Naive thymus-derived CD4-positive, alpha-beta T cell (primary cell): ENCODE measurements at regions of chr11 and their contacts with region 1.

Region 1: DNA sequence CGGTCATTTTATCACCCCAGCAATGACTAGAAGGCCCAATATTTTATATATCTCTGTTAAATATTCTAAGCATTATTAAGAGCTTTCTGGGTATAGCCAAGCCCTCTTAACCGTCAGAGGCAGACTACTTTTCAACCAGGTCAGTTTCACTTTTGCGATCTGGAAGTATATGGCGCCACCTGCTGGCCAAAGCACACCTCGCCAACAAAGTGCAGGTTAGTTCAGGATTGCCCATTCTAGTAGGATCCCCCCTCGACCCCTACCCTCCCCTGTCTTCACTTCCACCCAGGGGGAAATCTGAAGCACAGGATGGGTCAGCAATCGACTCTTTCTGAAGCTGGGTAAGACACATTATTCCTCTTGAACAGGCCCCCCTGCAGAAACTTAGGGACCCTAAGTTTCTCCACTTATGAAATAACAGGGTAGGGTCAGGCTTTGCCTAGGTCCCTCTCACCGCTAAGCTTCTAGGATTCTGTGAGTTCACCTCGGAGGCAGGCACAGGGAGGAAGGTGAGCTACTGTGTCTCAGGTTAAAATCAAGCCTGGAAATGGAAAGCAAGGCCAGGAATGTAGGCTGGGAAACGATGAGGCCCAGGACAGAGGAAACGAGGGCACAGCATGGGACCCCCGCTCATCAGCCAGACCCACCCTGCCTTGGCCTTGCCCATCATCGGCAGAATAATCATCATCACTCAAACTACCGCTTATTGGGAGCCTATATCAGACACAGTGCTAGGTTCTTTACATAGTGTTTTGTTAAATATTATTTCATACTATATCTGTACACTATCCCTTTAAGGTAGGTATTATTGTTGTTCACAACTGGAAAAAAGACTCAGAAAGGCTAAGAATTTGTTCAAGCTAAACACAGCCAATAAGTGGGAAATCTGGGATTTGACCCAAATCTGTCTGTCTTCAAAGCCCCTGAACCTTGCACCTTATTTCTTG is 35.6 kb downstream of the KCNJ1 start:
- DNase-seq: peak; percentile 68 to 85 (median 80)
- ATAC-seq: peak; percentile 90
- H3K4me3 ChIP-seq: peak overlapping the region; percentile 43
- H3K4me3 Mint-ChIP-seq: peak overlapping the region; percentile 61 to 87 (median 76)
- H3K27ac ChIP-seq: peak overlapping the region; percentile 67
- H3K27ac Mint-ChIP-seq: peak overlapping the region; percentile 58 to 98 (median 89)
- H3K4me1 ChIP-seq: peaks cover 11 to 15% of the 10 kb centered on the region in 2 donors
- H3K4me1 Mint-ChIP-seq: peaks cover 15 to 35% (median 24%) of the 10 kb centered on the region in 7 donors
- H3K27me3 ChIP-seq: no peaks in the 10 kb centered on the region
- H3K27me3 Mint-ChIP-seq: peaks cover 0 to 4% (median 0%) of the 10 kb centered on the region in 5 donors

Region 2: GRCh38 chr11:128026596-128026995 is 804.9 kb before region 1 on chr11:
- CTCF ChIA-PET with region 1: interaction called, 14 read pairs
- POLR2A ChIA-PET with region 1: no interaction called
- intact Hi-C with region 1: loop called (anchors 1 kb)
- DNase-seq: no peak
- ATAC-seq: peak; percentile 34
- H3K4me3 ChIP-seq: no peak overlapping the region
- H3K4me3 Mint-ChIP-seq: no peak overlapping the region
- H3K27ac ChIP-seq: no peak overlapping the region
- H3K27ac Mint-ChIP-seq: peak overlapping the region in 1 of 9 donors; percentile 12
- H3K4me1 ChIP-seq: peaks cover 0 to under 1% of the 10 kb centered on the region in 2 donors
- H3K4me1 Mint-ChIP-seq: peaks cover 0 to 5% (median 3%) of the 10 kb centered on the region in 7 donors
- H3K27me3 ChIP-seq: no peaks in the 10 kb centered on the region
- H3K27me3 Mint-ChIP-seq: peaks cover 0 to 37% (median 2%) of the 10 kb centered on the region in 5 donors

Region 3: GRCh38 chr11:128195057-128195751 is 636.2 kb before region 1 on chr11:
- CTCF ChIA-PET with region 1: interaction called, 3 read pairs
- POLR2A ChIA-PET with region 1: no interaction called
- intact Hi-C with region 1: loop called in 1 of 2 experiments (anchors 1 kb)
- DNase-seq: peak in 7 of 9 donors; percentile 63 to 85 (median 76)
- ATAC-seq: peak; percentile 86
- H3K4me3 ChIP-seq: no peak overlapping the region
- H3K4me3 Mint-ChIP-seq: peak overlapping the region in 9 of 10 donors; percentile 1 to 67 (median 49)
- H3K27ac ChIP-seq: peak overlapping the region; percentile 17
- H3K27ac Mint-ChIP-seq: peak overlapping the region in 8 of 9 donors; percentile 72 to 87 (median 81)
- H3K4me1 ChIP-seq: peaks cover 31 to 33% of the 10 kb centered on the region in 2 donors
- H3K4me1 Mint-ChIP-seq: peaks cover 31 to 45% (median 41%) of the 10 kb centered on the region in 7 donors
- H3K27me3 ChIP-seq: no peaks in the 10 kb centered on the region
- H3K27me3 Mint-ChIP-seq: peaks cover 0 to 2% (median 0%) of the 10 kb centered on the region in 5 donors

Region 4: GRCh38 chr11:128506999-128507611 is 324.3 kb before region 1 on chr11:
- CTCF ChIA-PET with region 1: interaction called, 3 read pairs
- POLR2A ChIA-PET with region 1: no interaction called
- intact Hi-C with region 1: loop called in 1 of 2 experiments (anchors 5 kb)
- DNase-seq: peak in 1 of 9 donors; percentile 60
- ATAC-seq: no peak
- H3K4me3 ChIP-seq: peak overlapping the region; percentile 96
- H3K4me3 Mint-ChIP-seq: peak overlapping the region; percentile 85 to 100 (median 98)
- H3K27ac ChIP-seq: peak overlapping the region; percentile 97
- H3K27ac Mint-ChIP-seq: peak overlapping the region; percentile 87 to 99 (median 97)
- H3K4me1 ChIP-seq: peaks cover 89 to 91% of the 10 kb centered on the region in 2 donors
- H3K4me1 Mint-ChIP-seq: peaks cover 70 to 98% (median 92%) of the 10 kb centered on the region in 7 donors
- H3K27me3 ChIP-seq: no peaks in the 10 kb centered on the region
- H3K27me3 Mint-ChIP-seq: no peaks in the 10 kb centered on the region

Region 5: DNA sequence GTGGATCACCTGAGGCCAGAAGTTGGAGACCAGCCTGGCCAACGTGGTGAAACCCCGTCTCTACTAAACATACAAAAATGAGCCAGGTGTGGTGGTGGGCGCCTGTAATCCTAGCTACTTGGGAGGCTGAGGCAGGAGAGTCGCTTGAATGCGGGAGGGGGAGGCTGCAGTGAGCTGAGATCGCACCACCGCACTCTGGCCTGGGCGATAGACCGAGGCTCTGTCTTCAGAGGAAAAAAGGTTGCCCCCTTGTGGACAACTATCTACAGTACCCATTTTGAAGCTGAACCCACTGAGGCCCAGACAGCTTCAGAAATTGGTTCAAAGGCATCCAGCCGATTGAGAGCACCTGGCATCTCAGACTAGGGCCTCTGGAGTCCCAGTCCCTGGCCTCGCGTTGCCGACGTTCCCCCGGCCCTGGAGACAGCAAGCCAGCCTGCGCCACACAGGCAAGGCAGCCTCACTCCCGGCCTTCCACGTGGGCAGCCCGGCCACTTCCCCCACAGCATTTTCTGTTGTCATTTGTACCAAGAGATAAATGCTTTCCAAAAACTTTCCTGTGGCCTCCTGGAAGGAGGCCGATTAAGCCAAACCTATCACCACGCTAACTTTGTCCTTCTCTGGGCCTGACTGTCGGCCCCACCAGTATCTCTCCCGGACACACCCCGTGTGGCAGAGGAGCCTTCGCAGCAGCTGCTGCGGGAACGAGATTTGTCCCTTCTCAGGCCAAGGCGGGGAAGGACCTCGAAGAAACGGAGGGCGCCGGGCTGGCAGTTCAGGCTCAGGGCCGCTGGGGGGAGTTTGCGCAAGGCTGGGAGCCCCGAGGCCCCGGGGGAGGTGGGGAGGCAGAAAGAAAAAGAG is 54.8 kb before region 1 on chr11:
- CTCF ChIA-PET with region 1: interaction called, 12 read pairs
- POLR2A ChIA-PET with region 1: no interaction called
- intact Hi-C with region 1: loop called (anchors 1 to 2 kb)
- DNase-seq: peak in 7 of 9 donors; percentile 12 to 44 (median 38)
- ATAC-seq: peak; percentile 80
- H3K4me3 ChIP-seq: no peak overlapping the region
- H3K4me3 Mint-ChIP-seq: no peak overlapping the region
- H3K27ac ChIP-seq: no peak overlapping the region
- H3K27ac Mint-ChIP-seq: peak overlapping the region in 6 of 9 donors; percentile 34 to 65 (median 58)
- H3K4me1 ChIP-seq: peaks cover 21 to 34% of the 10 kb centered on the region in 2 donors
- H3K4me1 Mint-ChIP-seq: peaks cover 46 to 89% (median 66%) of the 10 kb centered on the region in 7 donors
- H3K27me3 ChIP-seq: no peaks in the 10 kb centered on the region
- H3K27me3 Mint-ChIP-seq: no peaks in the 10 kb centered on the region

Region 6: DNA sequence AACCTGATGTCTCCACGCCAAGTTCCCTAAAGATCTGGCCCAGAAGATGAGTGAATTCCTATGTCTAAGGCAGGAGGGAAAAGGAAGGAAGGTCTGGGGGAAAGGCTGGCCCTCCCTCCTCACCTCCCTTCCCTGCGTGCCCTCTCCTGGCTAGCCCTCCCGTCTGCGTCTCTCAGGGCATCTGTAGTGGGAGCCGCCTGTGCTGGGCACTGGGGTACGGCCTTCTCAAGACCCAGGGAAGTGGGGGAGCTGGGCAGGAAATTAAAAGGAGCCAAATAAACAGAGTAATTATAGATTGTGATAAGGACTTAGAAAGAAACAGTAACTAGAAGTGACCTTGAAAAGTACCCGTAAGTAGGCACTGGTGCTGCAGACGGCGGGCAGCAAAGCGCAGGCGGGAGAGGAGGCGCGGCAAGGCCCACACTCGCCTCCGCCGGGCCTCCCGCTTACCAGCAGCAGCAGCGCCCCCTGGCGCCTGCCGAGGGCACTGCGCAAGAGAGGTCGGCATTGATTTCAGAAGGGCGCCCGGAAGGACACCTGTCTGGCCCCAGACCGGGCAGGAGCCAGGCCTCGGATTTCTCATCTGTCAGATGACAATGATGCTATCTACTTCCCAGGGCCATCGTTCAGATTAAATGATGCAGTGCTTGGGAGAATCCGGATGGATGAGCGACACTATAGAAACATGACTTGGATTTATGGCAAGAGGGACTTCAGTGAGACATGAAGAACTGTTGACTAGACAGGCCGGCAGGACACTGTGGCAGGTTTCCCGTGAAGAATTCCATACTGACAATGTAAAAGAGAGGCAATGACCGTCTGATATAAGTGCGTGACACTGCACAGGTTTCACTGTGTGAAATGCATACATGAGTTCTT is 28.4 kb after region 1 on chr11:
- CTCF ChIA-PET with region 1: interaction called, 5 read pairs
- POLR2A ChIA-PET with region 1: no interaction called
- intact Hi-C with region 1: loop called (anchors 1 to 2 kb)
- DNase-seq: peak; percentile 55 to 83 (median 66)
- ATAC-seq: peak; percentile 95
- H3K4me3 ChIP-seq: no peak overlapping the region
- H3K4me3 Mint-ChIP-seq: peak overlapping the region in 3 of 10 donors; percentile 12 to 26 (median 18)
- H3K27ac ChIP-seq: no peak overlapping the region
- H3K27ac Mint-ChIP-seq: no peak overlapping the region
- H3K4me1 ChIP-seq: peaks cover 0 to 4% of the 10 kb centered on the region in 2 donors
- H3K4me1 Mint-ChIP-seq: peaks cover 0 to 9% (median 5%) of the 10 kb centered on the region in 7 donors
- H3K27me3 ChIP-seq: no peaks in the 10 kb centered on the region
- H3K27me3 Mint-ChIP-seq: peaks cover 0 to 16% (median 0%) of the 10 kb centered on the region in 5 donors